Activated CD4-positive, alpha-beta T cell treated with anti-CD3 and anti-CD28 coated beads for 36 hours (primary cell): ENCODE measurements at regions of chr6 and their contacts with region 1.

Region 1: GRCh38 chr6:24974182-24975171 is 38.7 kb upstream of the RIPOR2 start:
- DNase-seq: peak; percentile 60
- ATAC-seq: peak; percentile 92
- H3K4me3 Mint-ChIP-seq: peak overlapping the region; percentile 33
- H3K27ac Mint-ChIP-seq: peak overlapping the region; percentile 86
- H3K4me1 Mint-ChIP-seq: peaks cover 59% of the 10 kb centered on the region
- H3K27me3 Mint-ChIP-seq: no peaks in the 10 kb centered on the region

Region 2: DNA sequence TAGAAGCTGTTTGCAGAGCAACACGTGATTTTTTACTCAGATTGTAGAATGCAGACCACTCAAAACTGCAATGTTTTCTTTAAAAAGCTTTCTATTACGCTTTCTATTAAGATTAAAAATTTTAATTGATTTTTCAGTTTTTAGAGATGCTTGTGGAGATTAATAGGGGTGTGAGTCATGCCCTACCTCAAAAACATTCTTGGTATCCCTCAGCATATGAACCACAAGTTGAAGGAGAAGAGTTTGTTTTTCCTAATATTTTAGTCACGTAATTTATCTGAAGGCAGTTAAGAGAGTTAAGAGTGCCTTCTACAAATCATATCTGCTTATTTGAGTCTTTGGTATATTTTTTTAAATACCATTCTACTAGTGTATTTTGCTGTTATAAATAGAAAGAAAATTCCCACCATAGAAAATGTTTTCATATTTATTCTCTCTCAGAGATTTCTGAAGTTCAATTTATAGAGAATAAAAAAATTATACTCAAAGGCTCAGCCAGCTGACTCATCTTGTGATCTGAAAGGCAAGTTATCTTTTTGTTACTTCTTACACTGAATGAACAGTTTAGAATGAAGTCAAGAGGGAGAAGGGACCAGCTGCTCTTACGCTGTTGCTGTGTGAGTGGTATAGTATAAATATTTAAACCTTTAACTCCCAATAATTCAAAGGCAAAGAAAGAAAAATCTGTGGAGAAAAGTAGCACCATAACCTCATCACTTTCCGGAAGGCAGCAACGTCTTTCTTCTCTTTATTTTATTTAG is 46.3 kb before region 1 on chr6:
- CTCF ChIA-PET with region 1: interaction called, 12 read pairs
- POLR2A ChIA-PET with region 1: interaction called, 13 read pairs
- intact Hi-C with region 1: loop called in 1 of 2 experiments (anchors 1 kb)
- DNase-seq: no peak
- ATAC-seq: peak; percentile 15
- H3K4me3 Mint-ChIP-seq: peak overlapping the region; percentile 84
- H3K27ac Mint-ChIP-seq: peak overlapping the region; percentile 95
- H3K4me1 Mint-ChIP-seq: peaks cover 90% of the 10 kb centered on the region
- H3K27me3 Mint-ChIP-seq: no peaks in the 10 kb centered on the region

Region 3: GRCh38 chr6:24960991-24961475 is 13.4 kb before region 1 on chr6:
- CTCF ChIA-PET with region 1: interaction called, 4 read pairs
- POLR2A ChIA-PET with region 1: interaction called, 11 read pairs
- intact Hi-C with region 1: loop called in 1 of 2 experiments (anchors 2 kb)
- DNase-seq: no peak
- ATAC-seq: peak; percentile 45
- H3K4me3 Mint-ChIP-seq: peak overlapping the region; percentile 24
- H3K27ac Mint-ChIP-seq: peak overlapping the region; percentile 86
- H3K4me1 Mint-ChIP-seq: peaks cover 74% of the 10 kb centered on the region
- H3K27me3 Mint-ChIP-seq: no peaks in the 10 kb centered on the region

Region 4: DNA sequence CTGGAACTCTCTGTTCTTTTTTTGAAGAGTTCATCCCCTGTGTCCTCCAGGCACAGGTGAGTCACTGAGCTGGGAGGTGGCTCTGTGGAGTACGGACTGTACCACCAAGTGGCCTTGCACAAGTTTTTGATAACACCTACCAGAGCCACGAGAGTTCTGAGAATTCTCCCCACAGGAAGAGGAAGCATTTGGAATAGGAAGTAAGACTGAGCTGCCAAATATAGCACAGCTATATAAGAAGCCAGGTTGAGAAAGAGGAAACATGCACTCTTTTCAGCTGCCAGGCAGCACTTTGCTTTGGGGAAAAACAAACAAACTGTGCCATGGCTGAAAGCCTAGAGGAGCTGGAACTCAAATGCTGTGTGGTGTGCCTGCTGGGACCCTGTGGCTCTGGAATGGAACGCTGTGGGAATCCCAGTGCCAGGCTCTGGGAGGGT is 32.1 kb after region 1 on chr6:
- CTCF ChIA-PET with region 1: interaction called, 4 read pairs
- POLR2A ChIA-PET with region 1: interaction called, 5 read pairs
- intact Hi-C with region 1: loop called (anchors 1 to 5 kb)
- DNase-seq: peak; percentile 62
- ATAC-seq: peak; percentile 58
- H3K4me3 Mint-ChIP-seq: peak overlapping the region; percentile 32
- H3K27ac Mint-ChIP-seq: peak overlapping the region; percentile 79
- H3K4me1 Mint-ChIP-seq: peaks cover 83% of the 10 kb centered on the region
- H3K27me3 Mint-ChIP-seq: no peaks in the 10 kb centered on the region